CD8-positive, alpha-beta T cell (primary cell): ENCODE measurements at regions of chr9 and their contacts with region 1.

Region 1: GRCh38 chr9:4984621-4985385 is at the start of gene JAK2:
- DNase-seq: peak; percentile 44 to 90 (median 74)
- ATAC-seq: peak; percentile 85
- H3K4me3 ChIP-seq: peak within 1 kb of the TSS; percentile 62 to 78
- H3K4me3 Mint-ChIP-seq: peak within 1 kb of the TSS; percentile 92
- H3K27ac ChIP-seq: peak within 1 kb of the TSS; percentile 58 to 80
- H3K27ac Mint-ChIP-seq: peak within 1 kb of the TSS; percentile 91
- H3K4me1 ChIP-seq: peaks cover 26% of the 10 kb centered on the region
- H3K4me1 Mint-ChIP-seq: peaks cover 25% of the 10 kb centered on the region
- H3K27me3 ChIP-seq: no peaks in the 10 kb centered on the region
- H3K27me3 Mint-ChIP-seq: no peaks in the 10 kb centered on the region
- CTCF ChIP-seq: no peak
- total RNA-seq, gene JAK2: 4.6 to 6.1 TPM

Region 2: DNA sequence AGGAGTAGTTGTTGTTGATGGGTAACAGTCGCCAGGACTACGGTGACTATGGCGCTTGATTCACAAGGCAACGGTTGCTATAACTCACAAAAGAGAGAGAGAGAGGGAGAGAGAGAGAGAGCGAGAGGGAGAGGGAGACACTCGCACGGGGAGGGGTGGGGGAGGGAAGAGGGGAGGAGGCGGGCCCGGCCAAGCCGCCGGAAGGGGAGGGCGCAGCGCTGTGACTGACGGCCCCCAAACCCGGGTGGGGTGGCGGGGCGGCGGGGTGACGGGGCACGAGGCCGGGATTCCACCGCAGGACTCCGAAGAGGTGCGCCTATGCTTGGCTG is 1459.0 kb before region 1 on chr9 and contains the start of gene RFX3:
- CTCF ChIA-PET with region 1: no interaction called
- POLR2A ChIA-PET with region 1: no interaction called
- intact Hi-C with region 1: loop called (anchors 2 to 5 kb)
- DNase-seq: peak; percentile 86 to 98 (median 93)
- ATAC-seq: peak; percentile 66
- H3K4me3 ChIP-seq: peak within 1 kb of the TSS; percentile 74 to 98
- H3K4me3 Mint-ChIP-seq: peak within 1 kb of the TSS; percentile 98
- H3K27ac ChIP-seq: peak within 1 kb of the TSS; percentile 99 to 100
- H3K27ac Mint-ChIP-seq: peak within 1 kb of the TSS; percentile 100
- H3K4me1 ChIP-seq: peaks cover 48% of the 10 kb centered on the region
- H3K4me1 Mint-ChIP-seq: peaks cover 65% of the 10 kb centered on the region
- H3K27me3 ChIP-seq: no peaks in the 10 kb centered on the region
- H3K27me3 Mint-ChIP-seq: no peaks in the 10 kb centered on the region
- CTCF ChIP-seq: no peak
- total RNA-seq, gene RFX3: 17.6 to 18.9 TPM

Region 3: GRCh38 chr9:4662108-4662988 is 322.5 kb before region 1 on chr9 and contains the start of gene PLPP6:
- CTCF ChIA-PET with region 1: no interaction called
- POLR2A ChIA-PET with region 1: no interaction called
- intact Hi-C with region 1: loop called in 1 of 2 experiments (anchors 2 kb)
- DNase-seq: peak; percentile 49 to 92 (median 78)
- ATAC-seq: peak; percentile 78
- H3K4me3 ChIP-seq: peak within 1 kb of the TSS; percentile 74 to 88
- H3K4me3 Mint-ChIP-seq: peak within 1 kb of the TSS; percentile 98
- H3K27ac ChIP-seq: peak within 1 kb of the TSS; percentile 67 to 70
- H3K27ac Mint-ChIP-seq: peak within 1 kb of the TSS; percentile 98
- H3K4me1 ChIP-seq: peaks cover 54% of the 10 kb centered on the region
- H3K4me1 Mint-ChIP-seq: peaks cover 66% of the 10 kb centered on the region
- H3K27me3 ChIP-seq: no peaks in the 10 kb centered on the region
- H3K27me3 Mint-ChIP-seq: no peaks in the 10 kb centered on the region
- CTCF ChIP-seq: peak; percentile 59
- total RNA-seq, gene PLPP6: 4.4 TPM

Region 4: GRCh38 chr9:4792572-4793458 is 192.0 kb before region 1 on chr9 and contains the start of gene RCL1:
- CTCF ChIA-PET with region 1: interaction called, 4 read pairs
- POLR2A ChIA-PET with region 1: interaction called, 16 read pairs
- intact Hi-C with region 1: loop called (anchors 1 kb)
- DNase-seq: peak; percentile 92 to 98 (median 95)
- ATAC-seq: peak; percentile 90
- H3K4me3 ChIP-seq: peak within 1 kb of the TSS; percentile 92 to 98
- H3K4me3 Mint-ChIP-seq: peak within 1 kb of the TSS; percentile 95
- H3K27ac ChIP-seq: peak within 1 kb of the TSS; percentile 90 to 92
- H3K27ac Mint-ChIP-seq: peak within 1 kb of the TSS; percentile 96
- H3K4me1 ChIP-seq: peaks cover 30% of the 10 kb centered on the region
- H3K4me1 Mint-ChIP-seq: peaks cover 47% of the 10 kb centered on the region
- H3K27me3 ChIP-seq: no peaks in the 10 kb centered on the region
- H3K27me3 Mint-ChIP-seq: no peaks in the 10 kb centered on the region
- CTCF ChIP-seq: no peak
- total RNA-seq, gene RCL1: 30.8 to 35.0 TPM

Region 5: DNA sequence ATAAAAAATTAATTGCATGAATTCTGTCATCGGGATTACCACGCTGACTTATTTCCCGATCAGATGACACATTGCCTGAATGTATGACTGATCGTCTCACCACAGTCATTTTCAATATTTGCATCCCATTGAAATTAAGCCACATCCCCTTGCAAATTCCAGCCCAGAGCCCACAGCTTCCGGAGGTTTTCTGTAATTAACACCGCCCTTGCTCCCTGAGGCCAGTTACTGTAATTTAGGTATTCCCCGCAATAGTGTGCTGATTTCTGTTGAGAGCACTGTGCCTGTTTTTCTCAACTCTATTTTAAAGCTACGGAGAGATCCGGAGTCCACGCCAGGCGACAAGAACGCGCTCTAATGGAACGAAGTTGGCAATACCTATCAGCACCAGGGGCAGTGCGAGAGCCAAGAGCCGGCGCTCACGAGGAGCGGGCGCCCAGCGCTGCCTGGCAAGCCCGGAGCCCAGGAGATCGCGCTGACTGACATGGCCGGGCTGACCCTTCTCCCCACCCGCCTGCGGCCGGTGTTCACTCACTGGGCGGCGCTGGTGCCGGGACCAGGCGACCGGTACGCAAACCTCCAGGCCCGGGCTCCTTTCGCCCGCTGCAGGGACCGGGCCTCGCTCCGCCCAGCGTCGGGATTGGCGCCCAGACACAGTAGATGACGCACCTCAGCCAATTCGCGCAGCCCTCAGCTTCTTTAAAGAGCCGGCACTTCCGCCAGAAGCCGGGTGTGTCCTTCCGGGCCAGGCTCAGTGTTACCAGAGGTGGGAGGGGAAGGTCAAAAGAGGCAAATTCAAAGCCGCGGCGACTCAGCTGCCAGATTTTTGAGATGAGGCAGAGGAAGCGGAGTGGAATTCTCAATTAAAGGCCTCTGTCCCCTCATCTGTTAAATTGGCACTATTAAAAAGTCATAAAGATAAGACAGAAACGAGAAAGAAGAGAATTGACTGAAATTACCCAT is 452.7 kb after region 1 on chr9 and contains the start of gene PLGRKT:
- CTCF ChIA-PET with region 1: no interaction called
- POLR2A ChIA-PET with region 1: no interaction called
- intact Hi-C with region 1: loop called (anchors 1 to 5 kb)
- DNase-seq: peak; percentile 76 to 96 (median 90)
- ATAC-seq: peak; percentile 96
- H3K4me3 ChIP-seq: peak within 1 kb of the TSS; percentile 71 to 76
- H3K4me3 Mint-ChIP-seq: peak within 1 kb of the TSS; percentile 89
- H3K27ac ChIP-seq: peak within 1 kb of the TSS; percentile 89 to 90
- H3K27ac Mint-ChIP-seq: peak within 1 kb of the TSS; percentile 96
- H3K4me1 ChIP-seq: peaks cover 23% of the 10 kb centered on the region
- H3K4me1 Mint-ChIP-seq: peaks cover 36% of the 10 kb centered on the region
- H3K27me3 ChIP-seq: no peaks in the 10 kb centered on the region
- H3K27me3 Mint-ChIP-seq: no peaks in the 10 kb centered on the region
- CTCF ChIP-seq: peak; percentile 10
- total RNA-seq, gene PLGRKT: 10.1 to 12.8 TPM

Region 6: DNA sequence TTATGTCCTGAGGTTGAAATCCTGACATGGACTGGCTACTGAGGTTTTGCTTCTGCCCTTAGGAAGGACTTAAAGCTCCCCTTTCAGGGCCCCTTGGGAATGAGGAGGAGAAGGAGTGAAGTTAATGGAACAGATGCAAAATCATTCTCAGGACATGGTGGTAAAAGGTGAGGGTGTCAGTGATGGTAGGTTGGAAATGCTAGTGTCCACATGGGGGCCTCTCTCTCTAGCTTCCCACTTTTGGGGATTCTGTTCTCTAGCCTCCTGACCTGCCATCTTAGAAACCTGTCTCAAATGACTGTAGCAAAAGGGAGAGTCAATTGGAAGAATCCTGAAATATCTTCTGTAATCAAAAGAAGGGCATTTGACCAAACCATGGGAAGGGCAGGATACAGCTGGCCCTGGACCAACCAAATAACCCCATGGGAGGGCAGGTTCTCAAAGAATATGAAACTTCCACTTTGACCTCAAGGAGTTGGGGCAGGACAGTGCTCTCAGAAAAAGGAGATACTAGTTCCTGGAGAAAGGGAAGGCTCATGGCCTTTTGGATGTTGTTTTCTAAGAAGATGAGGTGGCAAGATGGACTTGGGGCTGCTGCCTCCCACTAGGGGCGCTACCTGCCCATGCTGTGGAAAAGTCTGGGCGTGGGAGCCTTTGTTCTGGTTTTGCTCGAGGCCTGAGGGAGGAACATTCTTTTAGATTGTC is 884.7 kb after region 1 on chr9:
- CTCF ChIA-PET with region 1: no interaction called
- POLR2A ChIA-PET with region 1: no interaction called
- intact Hi-C with region 1: no loop called
- DNase-seq: peak in 2 of 9 experiments; percentile 23 to 30
- ATAC-seq: no peak
- H3K4me3 ChIP-seq: no peak overlapping the region
- H3K4me3 Mint-ChIP-seq: no peak overlapping the region
- H3K27ac ChIP-seq: no peak overlapping the region
- H3K27ac Mint-ChIP-seq: no peak overlapping the region
- H3K4me1 ChIP-seq: no peaks in the 10 kb centered on the region
- H3K4me1 Mint-ChIP-seq: peaks cover 13% of the 10 kb centered on the region
- H3K27me3 ChIP-seq: no peaks in the 10 kb centered on the region
- H3K27me3 Mint-ChIP-seq: no peaks in the 10 kb centered on the region
- CTCF ChIP-seq: no peak

Region 7: GRCh38 chr9:5999443-6000101 is 1014.8 kb after region 1 on chr9:
- CTCF ChIA-PET with region 1: no interaction called
- POLR2A ChIA-PET with region 1: no interaction called
- intact Hi-C with region 1: loop called in 1 of 2 experiments (anchors 5 kb)
- DNase-seq: no peak
- ATAC-seq: no peak
- H3K4me3 ChIP-seq: no peak overlapping the region
- H3K4me3 Mint-ChIP-seq: no peak overlapping the region
- H3K27ac ChIP-seq: no peak overlapping the region
- H3K27ac Mint-ChIP-seq: no peak overlapping the region
- H3K4me1 ChIP-seq: peaks cover 47% of the 10 kb centered on the region
- H3K4me1 Mint-ChIP-seq: peaks cover 68% of the 10 kb centered on the region
- H3K27me3 ChIP-seq: no peaks in the 10 kb centered on the region
- H3K27me3 Mint-ChIP-seq: no peaks in the 10 kb centered on the region
- CTCF ChIP-seq: no peak